ENCODE measurements at regions of chr2 and their contacts with region 1.

Region 1: DNA sequence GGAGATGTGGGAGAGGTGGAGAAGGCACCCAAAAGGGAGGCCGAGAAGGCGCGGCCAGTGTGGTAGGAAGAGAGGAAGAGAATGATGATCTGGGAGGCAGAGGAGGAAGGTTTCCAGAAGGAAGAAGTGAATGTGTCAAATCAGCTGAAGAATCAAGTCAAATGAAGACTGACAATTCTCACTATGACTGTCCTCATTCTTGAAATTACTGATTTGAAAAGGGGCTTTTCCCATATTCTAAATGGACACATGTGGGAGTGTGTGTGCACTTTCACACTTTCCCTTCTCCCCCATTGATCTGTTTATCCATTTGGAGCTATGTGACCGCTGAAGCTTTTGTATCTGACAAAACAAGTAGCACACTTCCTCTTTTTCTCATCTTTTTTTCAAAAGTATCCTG is 6.1 kb downstream of the AFF3 start:
- DNase-seq: no peak
- H3K4me3 Mint-ChIP-seq: no peak overlapping the region
- H3K27ac Mint-ChIP-seq: no peak overlapping the region
- H3K4me1 Mint-ChIP-seq: peaks cover 17% of the 10 kb centered on the region
- H3K27me3 Mint-ChIP-seq: peaks cover 8% of the 10 kb centered on the region

Region 2: GRCh38 chr2:98683728-98684127 is 1452.6 kb before region 1 on chr2:
- intact Hi-C with region 1: no loop called
- DNase-seq: no peak
- H3K4me3 Mint-ChIP-seq: no peak overlapping the region
- H3K27ac Mint-ChIP-seq: no peak overlapping the region
- H3K4me1 Mint-ChIP-seq: peaks cover 19% of the 10 kb centered on the region
- H3K27me3 Mint-ChIP-seq: no peaks in the 10 kb centered on the region

Region 3: DNA sequence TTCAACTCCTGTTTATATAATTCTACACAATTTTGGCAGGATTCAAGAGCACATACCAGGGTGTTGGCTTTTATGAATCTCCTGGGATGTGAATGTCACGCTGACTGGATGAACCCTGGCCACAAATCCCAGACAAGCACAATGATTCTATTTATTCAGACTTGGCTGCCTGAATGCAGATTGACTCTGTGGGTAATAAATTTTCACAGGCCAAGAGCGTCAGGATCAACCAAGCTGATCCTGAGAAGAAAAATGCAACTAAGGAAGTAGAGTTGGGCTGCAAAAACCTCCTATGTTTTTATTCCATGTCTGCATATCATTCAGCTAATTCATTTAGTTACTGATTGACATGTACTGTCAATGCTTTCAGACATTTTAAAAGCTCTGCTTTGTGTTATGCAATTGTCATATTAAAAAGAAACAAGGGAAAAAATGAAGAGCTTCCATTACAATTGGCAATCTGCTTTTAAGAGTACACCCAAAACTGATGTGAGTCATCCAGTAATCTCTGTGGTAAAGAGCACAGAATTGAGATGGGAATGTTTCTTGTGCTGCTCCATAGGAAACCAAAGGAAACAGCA is 473.5 kb before region 1 on chr2:
- intact Hi-C with region 1: no loop called
- DNase-seq: no peak
- H3K4me3 Mint-ChIP-seq: no peak overlapping the region
- H3K27ac Mint-ChIP-seq: no peak overlapping the region
- H3K4me1 Mint-ChIP-seq: no peaks in the 10 kb centered on the region
- H3K27me3 Mint-ChIP-seq: no peaks in the 10 kb centered on the region

Region 4: DNA sequence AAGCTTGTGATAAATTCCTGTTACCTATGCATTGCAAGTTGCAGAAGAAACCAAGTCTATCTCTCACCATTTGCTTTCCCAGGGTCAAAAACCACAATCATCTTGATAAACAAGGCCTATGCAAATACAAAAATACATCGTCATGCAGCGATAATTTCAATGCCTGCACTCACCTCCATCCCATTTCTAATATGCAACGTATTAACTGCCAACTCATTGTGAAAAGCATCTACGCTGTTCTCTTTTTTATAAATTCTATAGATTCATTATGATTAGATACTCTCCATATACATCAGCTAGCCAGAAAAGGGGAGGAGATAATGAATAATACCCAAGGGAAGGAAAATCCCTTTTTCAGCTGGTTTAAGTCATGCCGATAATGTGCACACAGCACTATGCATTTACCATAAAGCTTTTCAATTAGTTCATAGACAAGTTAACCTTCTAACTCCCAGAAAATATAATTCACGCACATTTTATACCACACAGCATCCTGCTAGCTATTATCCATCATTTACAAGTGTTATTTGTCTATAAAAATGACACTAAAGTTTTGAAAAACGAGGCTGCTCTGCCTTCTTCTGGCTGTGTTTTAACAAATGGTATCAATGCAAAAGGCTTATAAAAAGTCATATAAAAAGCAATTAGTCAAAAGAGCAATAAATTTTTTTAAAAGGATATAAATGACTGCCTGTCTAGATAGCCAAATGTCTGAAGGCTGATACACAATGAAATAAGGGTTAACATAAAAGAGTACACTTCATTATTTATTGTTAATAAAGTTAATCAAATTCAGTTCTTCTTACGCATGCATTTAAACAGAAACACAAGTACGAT is 71.5 kb before region 1 on chr2:
- intact Hi-C with region 1: loop called (anchors 2 kb)
- DNase-seq: no peak
- H3K4me3 Mint-ChIP-seq: no peak overlapping the region
- H3K27ac Mint-ChIP-seq: no peak overlapping the region
- H3K4me1 Mint-ChIP-seq: peaks cover 21% of the 10 kb centered on the region
- H3K27me3 Mint-ChIP-seq: peaks cover 4% of the 10 kb centered on the region

Region 5: DNA sequence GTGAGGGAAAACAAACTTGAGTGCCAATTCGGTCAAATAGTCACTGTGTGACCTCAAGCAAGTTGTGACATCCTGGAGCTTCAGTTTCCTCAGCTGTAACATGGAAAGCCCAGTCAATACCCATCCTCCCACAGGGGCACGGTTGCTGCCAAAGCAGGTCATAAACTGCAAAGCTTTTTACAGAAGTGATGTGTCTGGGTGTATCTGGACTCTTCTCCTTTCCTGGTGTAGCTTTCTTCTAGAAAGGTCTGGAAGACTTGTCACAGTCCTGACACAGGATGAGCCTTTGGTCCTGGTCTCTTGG is 10.3 kb after region 1 on chr2:
- intact Hi-C with region 1: no loop called
- DNase-seq: no peak
- H3K4me3 Mint-ChIP-seq: no peak overlapping the region
- H3K27ac Mint-ChIP-seq: no peak overlapping the region
- H3K4me1 Mint-ChIP-seq: peaks cover 23% of the 10 kb centered on the region
- H3K27me3 Mint-ChIP-seq: peaks cover 20% of the 10 kb centered on the region

Region 6: DNA sequence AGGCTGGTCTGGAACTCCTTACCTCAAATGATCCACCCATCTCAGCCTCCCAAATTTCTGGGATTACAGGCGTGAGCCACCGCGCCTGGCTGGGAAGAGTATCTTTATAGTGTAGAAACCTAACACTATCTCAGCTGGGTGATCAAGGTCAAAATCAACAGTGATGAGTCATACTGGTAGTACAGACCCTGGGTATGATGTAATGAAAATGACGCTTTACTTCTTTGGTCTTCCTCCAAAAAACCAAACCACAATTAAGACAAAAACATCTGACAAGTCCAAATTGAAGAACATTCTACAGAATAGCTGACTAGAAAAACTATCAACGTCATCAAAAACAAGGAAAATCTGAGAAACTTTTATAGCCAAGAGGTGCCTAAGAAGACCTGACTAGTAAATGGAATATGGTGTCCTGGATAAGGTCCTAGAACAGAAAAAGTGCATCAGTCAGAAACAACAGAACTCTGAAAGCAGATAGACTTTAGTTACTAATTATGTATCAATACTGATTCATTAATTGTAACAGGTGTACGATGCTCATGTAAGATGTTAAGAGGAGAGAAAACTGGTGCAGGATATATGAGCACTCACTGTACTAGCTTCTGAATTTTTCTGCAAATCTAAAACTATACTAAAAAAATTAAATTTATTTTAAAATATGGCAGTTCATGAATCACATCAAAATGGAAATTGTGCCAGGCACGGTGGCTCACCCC is 451.9 kb after region 1 on chr2:
- intact Hi-C with region 1: no loop called
- DNase-seq: peak; percentile 85
- H3K4me3 Mint-ChIP-seq: peak overlapping the region; percentile 32
- H3K27ac Mint-ChIP-seq: peak overlapping the region; percentile 67
- H3K4me1 Mint-ChIP-seq: peaks cover 39% of the 10 kb centered on the region
- H3K27me3 Mint-ChIP-seq: peaks cover 5% of the 10 kb centered on the region

Measured in activated CD4-positive, alpha-beta T cell treated with anti-CD3 and anti-CD28 coated beads, Interleukin-2, amount 10 ng/mL, durations not matched to agents 24 days and 14 days (primary cell).